Left cardiac atrium (tissue), 4 donors: ENCODE measurements at regions of chr6 and their contacts with region 1.

Region 1: DNA sequence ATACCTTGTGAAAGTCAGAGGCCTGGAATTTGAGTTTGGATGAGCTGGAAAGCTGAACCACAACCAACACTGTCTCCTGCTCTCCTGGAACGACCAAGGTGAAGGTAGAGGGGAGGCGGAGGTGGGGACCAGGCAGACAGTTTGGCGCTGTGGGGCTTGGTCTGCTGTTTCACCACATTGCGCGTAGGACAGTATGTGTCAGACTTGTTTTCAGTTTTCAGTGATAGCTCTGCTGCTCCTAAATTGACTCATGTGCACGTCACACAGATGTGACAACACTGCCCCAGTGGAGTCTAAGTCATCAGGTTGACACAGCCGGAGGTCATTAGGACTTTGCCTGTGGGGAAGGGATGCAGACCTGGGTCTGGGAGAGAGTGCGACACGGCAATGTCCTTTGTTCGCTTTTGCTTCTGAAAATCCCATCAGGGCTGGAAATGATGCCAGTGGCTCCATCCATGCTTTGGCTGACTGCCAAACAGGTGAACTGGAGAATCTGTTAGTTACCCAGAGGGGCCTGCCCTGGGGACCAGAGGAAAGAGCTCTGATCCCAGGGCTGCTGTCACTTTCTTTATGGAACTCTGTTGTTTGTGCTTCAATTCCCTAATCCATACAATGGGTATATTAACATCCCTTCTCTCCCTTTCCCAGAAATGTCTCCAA is 255.5 kb downstream of the CDC5L start:
- DNase-seq: no peak
- ATAC-seq: no peak

Region 2: DNA sequence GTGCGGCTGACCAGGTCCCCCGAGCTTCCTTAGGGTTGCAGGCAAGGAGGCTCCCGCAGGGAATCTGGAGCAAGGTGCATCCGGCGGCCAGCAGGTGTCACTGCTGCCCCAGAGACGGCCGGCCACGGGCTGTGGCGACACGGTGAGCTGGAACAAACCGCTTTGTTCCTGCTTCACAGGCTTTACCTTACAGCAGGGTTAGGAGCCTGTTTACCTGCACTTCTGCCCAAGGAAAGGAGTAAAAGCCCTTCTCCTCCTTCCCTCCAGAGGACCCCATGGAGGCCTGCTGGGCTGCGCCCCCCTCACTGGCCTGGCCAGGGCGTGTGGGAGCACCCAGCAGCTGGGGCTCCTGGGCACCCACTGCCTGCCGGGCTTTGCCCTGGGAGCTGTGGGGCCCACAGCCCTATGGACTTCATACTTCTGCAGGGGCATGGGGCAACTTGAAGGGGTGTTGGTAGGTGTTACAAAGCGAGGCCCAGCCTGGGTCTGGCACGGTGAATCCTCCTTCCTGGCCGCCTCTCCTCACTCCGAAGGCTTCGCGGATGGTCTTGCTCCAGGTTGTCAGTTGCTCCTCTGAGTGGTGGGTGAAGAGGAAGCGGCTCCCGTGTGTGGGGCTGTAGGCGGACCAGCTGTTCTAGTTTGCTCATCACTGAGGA is 167.1 kb before region 1 on chr6:
- intact Hi-C with region 1: loop called (anchors 5 to 10 kb)
- DNase-seq: peak; percentile 79
- ATAC-seq: peak; percentile 83 to 88

Region 3: GRCh38 chr6:44489910-44490604 is 152.9 kb before region 1 on chr6:
- intact Hi-C with region 1: loop called in 1 of 2 experiments (anchors 10 kb)
- DNase-seq: peak; percentile 41
- ATAC-seq: peak; percentile 89 to 94